Mammary epithelial cell (primary cell): ENCODE measurements at regions of chr3 and their contacts with region 1.

Region 1: DNA sequence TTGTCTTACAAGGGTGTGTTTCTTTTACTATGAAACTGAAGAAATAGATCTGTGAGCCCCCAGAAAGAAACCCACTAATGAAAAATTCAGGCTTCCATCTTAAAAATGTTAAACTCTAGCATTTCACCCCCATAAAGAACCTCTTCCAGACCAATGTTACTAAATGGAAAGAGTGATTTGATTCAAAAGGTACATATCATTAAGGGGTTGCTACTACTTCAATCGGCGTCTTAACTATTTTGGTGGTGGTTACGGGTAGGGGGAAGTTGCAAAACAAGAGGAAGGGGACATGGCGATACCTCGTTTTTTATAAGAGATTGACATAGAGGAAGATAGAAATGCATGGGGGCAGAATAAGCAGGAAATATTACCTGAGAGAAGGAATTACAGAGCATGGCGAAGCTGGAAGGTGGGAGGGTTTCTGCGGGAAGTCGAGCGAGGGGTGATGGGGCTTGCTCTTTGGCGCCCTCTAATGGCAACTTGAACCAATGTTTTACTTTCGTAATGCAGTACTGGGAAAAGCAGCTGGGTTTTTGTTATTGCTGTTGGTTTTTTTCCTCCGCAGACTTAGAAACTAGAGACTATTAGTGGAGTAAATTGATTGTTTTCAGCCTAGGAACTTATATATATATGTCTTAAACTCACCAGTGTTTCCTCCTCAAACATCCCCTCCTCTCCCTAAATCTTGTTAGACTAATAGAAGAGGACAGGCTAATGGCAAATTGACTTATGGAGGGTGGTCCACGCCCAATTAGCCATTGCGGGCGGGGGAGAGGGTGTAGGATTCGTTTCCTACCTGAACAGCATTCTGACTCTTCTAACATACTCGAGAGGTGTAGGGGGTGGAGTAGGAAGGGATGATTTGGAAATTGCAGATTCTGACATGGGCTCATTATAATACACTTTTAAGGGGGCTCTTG is 11.3 kb upstream of the SOX2 start:
- DNase-seq: peak; percentile 66
- H3K4me3 ChIP-seq: peak overlapping the region in 2 of 3 experiments; percentile 10 to 34
- H3K27ac ChIP-seq: no peak overlapping the region
- H3K4me1 ChIP-seq: peaks cover 28% of the 10 kb centered on the region
- H3K27me3 ChIP-seq: peaks cover 25% of the 10 kb centered on the region
- CTCF ChIP-seq: peak; percentile 87 to 88

Region 2: DNA sequence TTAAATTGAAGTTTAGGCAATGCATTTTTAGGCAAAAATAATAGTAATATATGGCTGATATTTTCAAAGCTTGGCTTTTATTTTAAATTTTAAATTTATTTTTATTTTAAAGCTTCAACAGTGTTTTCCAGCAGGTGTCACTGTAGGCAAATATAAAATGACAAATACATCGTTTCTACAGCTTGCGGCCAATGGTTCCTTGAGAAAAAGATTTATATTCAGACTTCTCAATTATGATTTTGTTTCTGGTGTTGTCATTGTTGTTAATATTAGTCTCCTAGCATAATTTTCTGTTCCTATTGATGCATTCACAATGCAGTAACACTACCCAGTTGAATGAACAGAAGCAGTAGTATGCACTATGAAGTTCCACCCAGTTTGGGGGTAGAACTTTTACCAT is 490.2 kb before region 1 on chr3:
- CTCF ChIA-PET with region 1: interaction called, 9 read pairs
- dilution Hi-C with region 1: no loop called
- in situ Hi-C with region 1: loop called (anchors 10 to 25 kb)
- intact Hi-C with region 1: loop called (anchors 1 kb)
- DNase-seq: peak; percentile 2
- H3K4me3 ChIP-seq: no peak overlapping the region
- H3K27ac ChIP-seq: no peak overlapping the region
- H3K4me1 ChIP-seq: no peaks in the 10 kb centered on the region
- H3K27me3 ChIP-seq: peaks cover 6% of the 10 kb centered on the region
- CTCF ChIP-seq: peak in 1 of 2 donors; percentile 35

Region 3: DNA sequence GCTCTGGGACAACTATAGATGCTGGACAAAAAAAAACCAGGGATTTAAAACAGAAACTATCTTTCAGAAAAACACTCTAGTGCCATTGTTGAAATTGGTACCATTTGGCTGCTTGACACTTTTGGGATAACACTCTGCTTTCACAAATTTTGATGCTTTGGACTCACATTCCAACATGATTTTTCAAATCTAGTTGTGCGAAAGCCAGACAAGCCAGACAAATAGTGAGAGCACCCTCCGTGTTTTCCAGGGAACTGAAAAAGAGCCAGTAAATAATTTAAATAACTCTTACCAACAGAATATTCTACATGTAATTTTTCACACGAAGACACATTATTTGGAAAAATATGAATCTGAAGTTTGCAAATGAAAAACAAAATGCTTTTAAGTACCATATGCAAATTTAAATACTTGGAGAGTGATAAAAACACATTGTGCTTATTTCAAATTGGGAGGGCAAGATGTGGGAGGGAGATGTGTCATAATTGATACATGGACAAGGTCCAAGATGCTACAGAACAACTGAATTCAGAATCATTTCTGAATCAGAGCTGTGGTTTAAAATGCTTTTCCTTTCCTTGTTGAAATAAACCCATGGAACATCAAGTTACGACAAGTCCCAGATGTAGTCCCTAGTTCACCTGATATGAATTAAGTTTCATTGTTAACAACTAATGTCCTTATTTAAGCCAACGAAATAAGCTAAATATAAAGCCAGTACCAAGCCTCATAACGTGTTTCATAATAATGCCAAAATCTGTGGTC is 132.9 kb before region 1 on chr3:
- CTCF ChIA-PET with region 1: interaction called, 7 read pairs
- dilution Hi-C with region 1: no loop called
- in situ Hi-C with region 1: no loop called
- intact Hi-C with region 1: loop called (anchors 1 kb)
- DNase-seq: peak; percentile 93
- H3K4me3 ChIP-seq: peak overlapping the region in 2 of 3 experiments; percentile 8 to 24
- H3K27ac ChIP-seq: peak overlapping the region; percentile 70
- H3K4me1 ChIP-seq: peaks cover 23% of the 10 kb centered on the region
- H3K27me3 ChIP-seq: no peaks in the 10 kb centered on the region
- CTCF ChIP-seq: no peak

Region 4: DNA sequence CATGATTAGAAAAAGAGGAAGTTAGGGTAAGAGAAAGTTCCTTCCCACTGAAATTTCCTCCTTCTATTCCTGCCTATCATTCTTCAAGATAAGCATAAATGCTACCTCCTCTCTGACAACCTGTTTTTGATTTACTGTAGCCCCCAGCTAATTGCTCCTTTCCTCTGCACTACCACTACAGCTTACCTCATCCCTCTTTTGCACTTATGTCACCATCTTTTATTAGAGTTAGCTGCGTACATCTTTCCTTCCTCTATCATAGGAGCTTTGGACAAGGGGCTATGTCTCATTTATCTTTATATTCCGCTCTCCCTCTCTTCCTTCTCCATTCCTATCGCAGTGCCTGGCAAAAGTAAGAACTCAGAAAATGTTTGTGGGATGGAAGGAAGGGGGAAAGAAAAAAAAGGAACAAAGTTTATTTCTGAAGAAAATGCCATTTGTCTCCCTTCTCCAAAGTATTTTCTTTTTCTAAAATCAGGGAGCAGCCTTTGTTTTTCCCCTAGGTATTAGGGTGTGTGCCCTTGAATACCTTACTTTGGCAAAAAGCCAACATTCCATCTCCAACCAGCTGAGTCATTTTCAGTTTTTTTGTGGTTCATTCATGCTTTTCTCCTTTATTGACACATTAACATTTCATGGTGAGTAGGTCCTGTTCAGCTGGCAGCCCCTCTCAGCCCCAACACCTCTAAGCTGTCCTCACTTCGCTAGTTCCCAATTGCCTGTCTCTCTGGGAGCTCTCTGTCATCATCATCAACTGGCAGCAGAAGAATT is 76.3 kb before region 1 on chr3:
- CTCF ChIA-PET with region 1: no interaction called
- dilution Hi-C with region 1: no loop called
- in situ Hi-C with region 1: no loop called
- intact Hi-C with region 1: loop called (anchors 5 kb)
- DNase-seq: peak; percentile 80
- H3K4me3 ChIP-seq: no peak overlapping the region
- H3K27ac ChIP-seq: peak overlapping the region; percentile 77
- H3K4me1 ChIP-seq: peaks cover 37% of the 10 kb centered on the region
- H3K27me3 ChIP-seq: no peaks in the 10 kb centered on the region
- CTCF ChIP-seq: no peak

Region 5: DNA sequence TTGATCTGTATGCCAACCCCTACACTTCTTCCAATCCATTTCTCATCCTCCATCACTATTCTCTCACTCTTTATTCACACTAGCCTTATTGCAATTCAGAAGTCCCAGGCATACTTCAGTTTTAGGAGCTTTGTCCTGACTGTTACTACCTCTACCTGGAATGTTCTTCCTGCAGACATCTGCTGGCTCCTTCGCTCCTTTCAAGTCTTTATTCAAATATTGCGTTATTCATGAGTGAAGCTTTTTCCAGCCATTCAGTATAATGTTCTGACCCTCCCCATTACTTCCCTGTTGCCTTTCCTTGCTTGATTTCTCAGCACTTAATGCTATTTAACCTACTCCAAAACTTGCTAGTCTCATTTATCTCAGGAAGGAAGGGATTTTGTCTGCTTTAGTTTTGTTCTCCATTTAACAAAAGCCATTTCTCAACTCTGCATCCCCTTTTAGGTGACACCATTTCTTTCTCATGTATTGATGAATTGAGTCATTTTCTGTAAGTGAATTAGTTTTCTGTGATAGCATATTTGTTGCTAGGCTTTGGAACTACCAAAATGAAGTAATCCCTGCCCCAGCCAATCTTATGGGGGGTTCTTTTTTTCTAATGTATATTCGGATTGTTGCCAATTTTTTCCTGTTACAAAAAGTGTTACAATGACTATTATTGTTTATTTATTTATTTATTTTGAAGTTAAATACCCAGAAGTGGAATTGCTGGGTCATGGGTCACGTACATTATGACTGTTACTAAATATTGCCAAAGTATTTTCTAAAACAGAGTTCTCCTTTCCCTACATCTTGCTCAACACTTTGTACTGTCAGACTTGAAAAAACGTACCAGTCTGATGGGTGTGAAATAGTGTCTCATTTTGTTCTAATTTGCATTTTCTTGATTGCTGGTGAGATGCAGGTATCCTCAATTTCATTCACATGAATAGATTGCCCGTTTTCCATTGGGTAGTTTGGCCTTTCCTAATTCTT is 1102.3 kb after region 1 on chr3:
- CTCF ChIA-PET with region 1: no interaction called
- dilution Hi-C with region 1: no loop called
- in situ Hi-C with region 1: no loop called
- intact Hi-C with region 1: no loop called
- DNase-seq: no peak
- H3K4me3 ChIP-seq: no peak overlapping the region
- H3K27ac ChIP-seq: no peak overlapping the region
- H3K4me1 ChIP-seq: peaks cover 9% of the 10 kb centered on the region
- H3K27me3 ChIP-seq: no peaks in the 10 kb centered on the region
- CTCF ChIP-seq: no peak